CD8-positive, alpha-beta T cell (primary cell): ENCODE measurements at regions of chr9 and their contacts with region 1.

Region 1: GRCh38 chr9:100322954-100323536 is 29.7 kb downstream of the TEX10 start:
- DNase-seq: peak in 4 of 9 experiments; percentile 11 to 48 (median 30)
- ATAC-seq: no peak
- H3K4me3 ChIP-seq: no peak overlapping the region
- H3K4me3 Mint-ChIP-seq: no peak overlapping the region
- H3K27ac ChIP-seq: no peak overlapping the region
- H3K27ac Mint-ChIP-seq: no peak overlapping the region
- H3K4me1 ChIP-seq: no peaks in the 10 kb centered on the region
- H3K4me1 Mint-ChIP-seq: peaks cover 14% of the 10 kb centered on the region
- H3K27me3 ChIP-seq: no peaks in the 10 kb centered on the region
- H3K27me3 Mint-ChIP-seq: no peaks in the 10 kb centered on the region
- CTCF ChIP-seq: peak; percentile 39

Region 2: DNA sequence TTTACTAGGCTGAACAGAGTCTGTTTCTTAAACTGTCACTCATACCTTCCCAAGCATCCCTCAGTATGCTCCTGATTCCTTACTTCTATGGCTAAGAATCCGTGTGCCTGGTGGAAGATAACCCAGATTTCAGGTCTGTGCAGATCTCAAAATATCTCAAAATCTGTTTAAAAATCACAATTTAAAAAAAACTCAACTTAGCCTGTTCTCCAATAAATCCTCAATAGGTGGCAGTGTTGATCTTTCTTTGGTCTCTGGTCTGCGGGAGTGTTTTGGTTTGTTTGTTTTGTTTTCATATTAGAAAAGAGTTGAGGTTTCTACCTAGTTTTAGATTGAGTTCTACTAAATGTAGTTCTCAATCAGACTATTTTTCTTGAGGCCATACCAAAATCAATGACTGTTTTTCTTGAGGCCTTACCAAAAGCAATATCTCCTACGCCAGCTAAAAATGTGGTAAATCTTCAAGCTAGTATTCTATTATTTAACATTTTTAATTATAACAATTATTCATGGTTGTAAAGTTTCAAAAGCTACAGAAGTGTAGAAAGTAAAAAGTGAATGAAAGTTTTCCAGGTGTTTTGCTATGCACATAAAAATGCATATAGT is 1160.2 kb before region 1 on chr9:
- CTCF ChIA-PET with region 1: no interaction called
- POLR2A ChIA-PET with region 1: no interaction called
- intact Hi-C with region 1: loop called in 1 of 2 experiments (anchors 2 kb)
- DNase-seq: peak in 2 of 9 experiments; percentile 56 to 71
- ATAC-seq: no peak
- H3K4me3 ChIP-seq: no peak overlapping the region
- H3K4me3 Mint-ChIP-seq: no peak overlapping the region
- H3K27ac ChIP-seq: no peak overlapping the region
- H3K27ac Mint-ChIP-seq: no peak overlapping the region
- H3K4me1 ChIP-seq: peaks cover 14% of the 10 kb centered on the region
- H3K4me1 Mint-ChIP-seq: peaks cover 26% of the 10 kb centered on the region
- H3K27me3 ChIP-seq: no peaks in the 10 kb centered on the region
- H3K27me3 Mint-ChIP-seq: no peaks in the 10 kb centered on the region
- CTCF ChIP-seq: peak; percentile 86

Region 3: DNA sequence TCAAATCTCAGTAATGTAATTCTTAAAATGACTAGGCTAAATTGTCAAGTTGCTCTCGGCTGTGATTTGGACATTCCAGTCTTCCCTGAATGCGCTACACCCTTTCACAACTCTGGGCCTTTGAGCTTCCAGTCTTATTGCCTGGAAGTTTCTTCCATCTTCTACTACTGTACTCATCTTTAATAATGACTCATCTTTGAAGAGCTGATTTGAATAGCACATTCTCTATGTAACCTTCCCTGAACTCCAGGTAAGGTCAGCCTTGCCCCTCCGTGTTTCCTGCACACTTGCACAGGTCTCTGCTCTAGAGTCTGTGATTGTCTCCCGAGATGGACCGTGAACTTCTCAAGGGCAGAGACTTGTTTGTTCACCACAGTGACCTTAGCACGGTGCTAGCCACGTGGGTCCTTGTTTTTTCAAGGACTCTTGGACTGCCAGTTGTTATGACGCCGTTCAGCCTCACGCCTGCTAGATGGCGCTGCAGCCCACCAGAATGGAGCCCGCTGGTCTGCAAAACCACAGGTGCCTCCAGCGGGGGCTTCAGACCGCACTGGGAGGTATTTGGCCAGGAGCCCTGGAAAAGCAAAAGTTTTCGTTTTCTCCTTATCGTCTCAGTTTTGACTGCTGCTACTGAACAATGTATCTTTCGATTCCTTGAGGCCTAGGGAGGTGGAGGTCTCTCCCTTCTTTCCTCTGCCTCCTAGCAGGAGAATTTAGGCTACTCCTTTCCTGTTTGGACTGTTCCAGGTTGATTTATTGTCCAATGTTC is 1056.6 kb before region 1 on chr9:
- CTCF ChIA-PET with region 1: no interaction called
- POLR2A ChIA-PET with region 1: no interaction called
- intact Hi-C with region 1: loop called (anchors 2 kb)
- DNase-seq: peak; percentile 12 to 73 (median 59)
- ATAC-seq: peak; percentile 58
- H3K4me3 ChIP-seq: peak overlapping the region in 1 of 2 experiments; percentile 18
- H3K4me3 Mint-ChIP-seq: peak overlapping the region; percentile 9
- H3K27ac ChIP-seq: no peak overlapping the region
- H3K27ac Mint-ChIP-seq: no peak overlapping the region
- H3K4me1 ChIP-seq: peaks cover 7% of the 10 kb centered on the region
- H3K4me1 Mint-ChIP-seq: peaks cover 9% of the 10 kb centered on the region
- H3K27me3 ChIP-seq: no peaks in the 10 kb centered on the region
- H3K27me3 Mint-ChIP-seq: peaks cover 2% of the 10 kb centered on the region
- CTCF ChIP-seq: peak; percentile 87

Region 4: DNA sequence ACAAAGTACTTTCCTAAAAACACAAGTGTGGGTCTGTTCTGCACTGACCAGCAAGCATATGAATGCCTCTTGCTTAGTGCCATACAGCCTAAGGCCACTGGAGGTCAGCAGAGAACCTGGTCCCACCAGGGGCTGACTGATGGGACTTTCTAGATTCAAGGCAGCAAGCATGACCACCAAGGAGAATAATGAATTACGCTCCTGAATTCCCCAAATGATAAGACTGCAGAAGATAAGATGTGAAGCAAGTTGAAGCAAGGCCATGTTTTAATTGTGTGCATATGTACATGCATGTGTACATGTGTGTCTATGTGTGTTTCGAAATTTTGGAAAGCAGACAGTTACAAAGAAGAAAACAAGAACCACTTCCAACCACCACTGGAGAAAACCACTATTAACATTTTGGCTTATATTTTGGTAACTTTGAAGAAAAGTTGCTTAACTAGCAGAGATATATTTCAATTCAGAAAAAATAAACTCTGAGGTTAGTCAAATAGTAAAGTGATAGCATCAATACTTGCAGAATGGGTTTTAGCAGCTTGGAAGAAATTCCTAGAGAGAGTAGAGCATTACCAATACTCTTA is 294.8 kb before region 1 on chr9:
- CTCF ChIA-PET with region 1: interaction called, 3 read pairs
- POLR2A ChIA-PET with region 1: no interaction called
- intact Hi-C with region 1: loop called (anchors 1 to 5 kb)
- DNase-seq: peak; percentile 47 to 75 (median 66)
- ATAC-seq: peak; percentile 97
- H3K4me3 ChIP-seq: no peak overlapping the region
- H3K4me3 Mint-ChIP-seq: no peak overlapping the region
- H3K27ac ChIP-seq: no peak overlapping the region
- H3K27ac Mint-ChIP-seq: no peak overlapping the region
- H3K4me1 ChIP-seq: no peaks in the 10 kb centered on the region
- H3K4me1 Mint-ChIP-seq: peaks cover 3% of the 10 kb centered on the region
- H3K27me3 ChIP-seq: no peaks in the 10 kb centered on the region
- H3K27me3 Mint-ChIP-seq: no peaks in the 10 kb centered on the region
- CTCF ChIP-seq: peak; percentile 73

Region 5: GRCh38 chr9:100160021-100160420 is 163.0 kb before region 1 on chr9:
- CTCF ChIA-PET with region 1: no interaction called
- POLR2A ChIA-PET with region 1: no interaction called
- intact Hi-C with region 1: no loop called
- DNase-seq: no peak
- ATAC-seq: no peak
- H3K4me3 ChIP-seq: no peak overlapping the region
- H3K4me3 Mint-ChIP-seq: no peak overlapping the region
- H3K27ac ChIP-seq: no peak overlapping the region
- H3K27ac Mint-ChIP-seq: no peak overlapping the region
- H3K4me1 ChIP-seq: no peaks in the 10 kb centered on the region
- H3K4me1 Mint-ChIP-seq: no peaks in the 10 kb centered on the region
- H3K27me3 ChIP-seq: no peaks in the 10 kb centered on the region
- H3K27me3 Mint-ChIP-seq: no peaks in the 10 kb centered on the region
- CTCF ChIP-seq: no peak

Region 6: DNA sequence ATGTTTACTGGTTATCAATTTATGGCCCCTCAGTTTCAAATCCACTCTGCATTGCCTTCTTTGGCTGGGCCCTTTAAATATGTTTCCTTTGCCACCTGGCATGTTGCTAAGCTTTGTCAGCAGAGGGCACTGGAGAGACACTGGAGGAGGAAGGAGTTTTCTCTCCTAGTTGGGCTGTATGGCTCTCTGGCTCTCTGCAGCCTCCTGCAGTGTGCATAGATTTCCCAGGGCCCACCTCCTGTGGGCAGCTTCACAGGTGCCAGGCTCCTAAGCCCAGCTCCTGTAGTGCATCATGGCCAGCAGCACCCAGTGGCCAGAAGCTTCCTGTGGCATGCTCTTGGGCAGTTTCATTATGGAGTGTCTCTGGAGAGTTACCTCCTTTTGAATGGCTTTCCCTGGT is 278.2 kb after region 1 on chr9:
- CTCF ChIA-PET with region 1: no interaction called
- POLR2A ChIA-PET with region 1: no interaction called
- intact Hi-C with region 1: no loop called
- DNase-seq: peak in 5 of 9 experiments; percentile 16 to 48 (median 32)
- ATAC-seq: no peak
- H3K4me3 ChIP-seq: no peak overlapping the region
- H3K4me3 Mint-ChIP-seq: no peak overlapping the region
- H3K27ac ChIP-seq: no peak overlapping the region
- H3K27ac Mint-ChIP-seq: no peak overlapping the region
- H3K4me1 ChIP-seq: peaks cover 7% of the 10 kb centered on the region
- H3K4me1 Mint-ChIP-seq: peaks cover 20% of the 10 kb centered on the region
- H3K27me3 ChIP-seq: no peaks in the 10 kb centered on the region
- H3K27me3 Mint-ChIP-seq: no peaks in the 10 kb centered on the region
- CTCF ChIP-seq: peak; percentile 30

Region 7: GRCh38 chr9:101925498-101925897 is 1602.5 kb after region 1 on chr9:
- CTCF ChIA-PET with region 1: no interaction called
- POLR2A ChIA-PET with region 1: no interaction called
- intact Hi-C with region 1: no loop called
- DNase-seq: no peak
- ATAC-seq: no peak
- H3K4me3 ChIP-seq: no peak overlapping the region
- H3K4me3 Mint-ChIP-seq: no peak overlapping the region
- H3K27ac ChIP-seq: no peak overlapping the region
- H3K27ac Mint-ChIP-seq: no peak overlapping the region
- H3K4me1 ChIP-seq: no peaks in the 10 kb centered on the region
- H3K4me1 Mint-ChIP-seq: no peaks in the 10 kb centered on the region
- H3K27me3 ChIP-seq: no peaks in the 10 kb centered on the region
- H3K27me3 Mint-ChIP-seq: no peaks in the 10 kb centered on the region
- CTCF ChIP-seq: no peak